CD8-positive, alpha-beta T cell (primary cell): ENCODE measurements at regions of chr7 and their contacts with region 1.

Region 1: GRCh38 chr7:37201003-37201875 is 247.4 kb downstream of the ELMO1 start:
- DNase-seq: peak; percentile 6 to 65 (median 48)
- ATAC-seq: no peak
- H3K4me3 ChIP-seq: no peak overlapping the region
- H3K4me3 Mint-ChIP-seq: no peak overlapping the region
- H3K27ac ChIP-seq: no peak overlapping the region
- H3K27ac Mint-ChIP-seq: peak overlapping the region; percentile 34
- H3K4me1 ChIP-seq: no peaks in the 10 kb centered on the region
- H3K4me1 Mint-ChIP-seq: peaks cover 4% of the 10 kb centered on the region
- H3K27me3 ChIP-seq: no peaks in the 10 kb centered on the region
- H3K27me3 Mint-ChIP-seq: no peaks in the 10 kb centered on the region
- CTCF ChIP-seq: peak; percentile 45

Region 2: GRCh38 chr7:35985126-35985754 is 1216.0 kb before region 1 on chr7:
- CTCF ChIA-PET with region 1: no interaction called
- POLR2A ChIA-PET with region 1: no interaction called
- intact Hi-C with region 1: loop called in 1 of 2 experiments (anchors 2 kb)
- DNase-seq: peak; percentile 63 to 86 (median 78)
- ATAC-seq: peak; percentile 100
- H3K4me3 ChIP-seq: no peak overlapping the region
- H3K4me3 Mint-ChIP-seq: no peak overlapping the region
- H3K27ac ChIP-seq: no peak overlapping the region
- H3K27ac Mint-ChIP-seq: no peak overlapping the region
- H3K4me1 ChIP-seq: no peaks in the 10 kb centered on the region
- H3K4me1 Mint-ChIP-seq: no peaks in the 10 kb centered on the region
- H3K27me3 ChIP-seq: no peaks in the 10 kb centered on the region
- H3K27me3 Mint-ChIP-seq: no peaks in the 10 kb centered on the region
- CTCF ChIP-seq: peak; percentile 82

Region 3: DNA sequence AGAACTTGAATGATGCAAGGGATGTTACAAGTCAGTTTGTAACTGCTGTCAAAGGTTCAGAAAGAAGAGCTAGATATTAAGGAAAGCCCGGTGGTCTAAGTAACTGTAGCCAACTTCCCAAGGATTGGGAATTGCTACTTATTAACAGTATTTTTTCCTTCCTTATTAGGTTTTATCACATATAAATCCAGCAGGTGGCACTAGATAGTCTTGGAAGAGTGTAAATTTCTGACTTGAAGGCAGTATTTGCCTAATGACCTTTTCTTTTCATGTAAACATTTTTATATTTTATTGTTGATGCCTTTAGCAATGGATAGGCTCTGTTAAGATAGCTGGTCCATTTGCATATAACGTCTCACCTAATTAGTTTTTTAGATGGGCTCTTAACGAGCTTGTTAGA is 760.4 kb before region 1 on chr7:
- CTCF ChIA-PET with region 1: interaction called, 19 read pairs
- POLR2A ChIA-PET with region 1: no interaction called
- intact Hi-C with region 1: loop called (anchors 1 to 2 kb)
- DNase-seq: peak in 2 of 9 experiments; percentile 17 to 34
- ATAC-seq: no peak
- H3K4me3 ChIP-seq: no peak overlapping the region
- H3K4me3 Mint-ChIP-seq: no peak overlapping the region
- H3K27ac ChIP-seq: no peak overlapping the region
- H3K27ac Mint-ChIP-seq: no peak overlapping the region
- H3K4me1 ChIP-seq: no peaks in the 10 kb centered on the region
- H3K4me1 Mint-ChIP-seq: no peaks in the 10 kb centered on the region
- H3K27me3 ChIP-seq: no peaks in the 10 kb centered on the region
- H3K27me3 Mint-ChIP-seq: no peaks in the 10 kb centered on the region
- CTCF ChIP-seq: no peak

Region 4: GRCh38 chr7:36526863-36527548 is 674.2 kb before region 1 on chr7:
- CTCF ChIA-PET with region 1: interaction called, 11 read pairs
- POLR2A ChIA-PET with region 1: no interaction called
- intact Hi-C with region 1: no loop called
- DNase-seq: no peak
- ATAC-seq: no peak
- H3K4me3 ChIP-seq: no peak overlapping the region
- H3K4me3 Mint-ChIP-seq: no peak overlapping the region
- H3K27ac ChIP-seq: no peak overlapping the region
- H3K27ac Mint-ChIP-seq: peak overlapping the region; percentile 9
- H3K4me1 ChIP-seq: no peaks in the 10 kb centered on the region
- H3K4me1 Mint-ChIP-seq: peaks cover 3% of the 10 kb centered on the region
- H3K27me3 ChIP-seq: no peaks in the 10 kb centered on the region
- H3K27me3 Mint-ChIP-seq: no peaks in the 10 kb centered on the region
- CTCF ChIP-seq: no peak

Region 5: DNA sequence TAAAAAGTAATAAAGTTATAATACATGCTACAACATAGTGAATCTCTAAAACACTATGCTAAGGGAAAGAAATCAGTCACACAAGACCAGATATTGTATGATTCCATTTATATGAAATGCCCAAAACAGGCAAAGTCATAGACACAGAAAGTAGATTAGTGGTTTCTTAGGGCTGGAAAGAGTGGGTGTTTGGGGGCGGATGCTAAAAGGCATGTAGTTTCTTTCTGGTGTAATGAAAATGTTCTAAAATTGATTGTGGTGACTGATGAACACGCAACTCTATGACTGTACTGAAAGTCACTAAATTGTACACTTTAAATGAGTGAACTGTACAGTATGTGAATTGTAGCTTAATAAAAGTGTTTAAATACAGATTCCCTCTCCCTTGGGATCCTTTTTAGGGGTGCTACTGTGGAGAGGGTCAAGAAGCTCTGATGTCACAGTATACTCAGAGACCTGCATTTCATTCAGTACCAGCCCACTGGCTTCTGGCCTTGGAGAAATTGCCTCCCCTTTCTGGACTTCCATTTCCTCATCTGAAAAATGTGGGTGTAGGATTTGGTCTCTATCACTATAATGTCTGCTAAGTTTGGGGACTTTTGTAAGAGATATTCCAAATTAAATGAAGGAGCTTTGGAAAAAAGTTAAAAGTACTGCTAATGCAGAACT is 523.3 kb before region 1 on chr7:
- CTCF ChIA-PET with region 1: interaction called, 10 read pairs
- POLR2A ChIA-PET with region 1: interaction called, 3 read pairs
- intact Hi-C with region 1: no loop called
- DNase-seq: peak in 3 of 9 experiments; percentile 31 to 64 (median 32)
- ATAC-seq: peak; percentile 59
- H3K4me3 ChIP-seq: peak overlapping the region in 1 of 2 experiments; percentile 24
- H3K4me3 Mint-ChIP-seq: peak overlapping the region; percentile 70
- H3K27ac ChIP-seq: peak overlapping the region; percentile 15 to 75
- H3K27ac Mint-ChIP-seq: peak overlapping the region; percentile 91
- H3K4me1 ChIP-seq: peaks cover 32% of the 10 kb centered on the region
- H3K4me1 Mint-ChIP-seq: peaks cover 63% of the 10 kb centered on the region
- H3K27me3 ChIP-seq: no peaks in the 10 kb centered on the region
- H3K27me3 Mint-ChIP-seq: no peaks in the 10 kb centered on the region
- CTCF ChIP-seq: no peak

Region 6: GRCh38 chr7:37065779-37066271 is 135.4 kb before region 1 on chr7:
- CTCF ChIA-PET with region 1: no interaction called
- POLR2A ChIA-PET with region 1: no interaction called
- intact Hi-C with region 1: no loop called
- DNase-seq: peak in 1 of 9 experiments; percentile 3
- ATAC-seq: no peak
- H3K4me3 ChIP-seq: no peak overlapping the region
- H3K4me3 Mint-ChIP-seq: no peak overlapping the region
- H3K27ac ChIP-seq: no peak overlapping the region
- H3K27ac Mint-ChIP-seq: peak overlapping the region; percentile 1
- H3K4me1 ChIP-seq: no peaks in the 10 kb centered on the region
- H3K4me1 Mint-ChIP-seq: peaks cover 22% of the 10 kb centered on the region
- H3K27me3 ChIP-seq: no peaks in the 10 kb centered on the region
- H3K27me3 Mint-ChIP-seq: no peaks in the 10 kb centered on the region
- CTCF ChIP-seq: no peak

Region 7: GRCh38 chr7:37833107-37833817 is 632.0 kb after region 1 on chr7:
- CTCF ChIA-PET with region 1: no interaction called
- POLR2A ChIA-PET with region 1: no interaction called
- intact Hi-C with region 1: loop called in 1 of 2 experiments (anchors 10 kb)
- DNase-seq: peak in 7 of 9 experiments; percentile 18 to 72 (median 41)
- ATAC-seq: peak; percentile 73
- H3K4me3 ChIP-seq: peak overlapping the region; percentile 39 to 46
- H3K4me3 Mint-ChIP-seq: peak overlapping the region; percentile 83
- H3K27ac ChIP-seq: no peak overlapping the region
- H3K27ac Mint-ChIP-seq: peak overlapping the region; percentile 38
- H3K4me1 ChIP-seq: no peaks in the 10 kb centered on the region
- H3K4me1 Mint-ChIP-seq: peaks cover 8% of the 10 kb centered on the region
- H3K27me3 ChIP-seq: no peaks in the 10 kb centered on the region
- H3K27me3 Mint-ChIP-seq: peaks cover 7% of the 10 kb centered on the region
- CTCF ChIP-seq: peak; percentile 72